ENCODE measurements at regions of chr17 and their contacts with region 1.

Region 1: DNA sequence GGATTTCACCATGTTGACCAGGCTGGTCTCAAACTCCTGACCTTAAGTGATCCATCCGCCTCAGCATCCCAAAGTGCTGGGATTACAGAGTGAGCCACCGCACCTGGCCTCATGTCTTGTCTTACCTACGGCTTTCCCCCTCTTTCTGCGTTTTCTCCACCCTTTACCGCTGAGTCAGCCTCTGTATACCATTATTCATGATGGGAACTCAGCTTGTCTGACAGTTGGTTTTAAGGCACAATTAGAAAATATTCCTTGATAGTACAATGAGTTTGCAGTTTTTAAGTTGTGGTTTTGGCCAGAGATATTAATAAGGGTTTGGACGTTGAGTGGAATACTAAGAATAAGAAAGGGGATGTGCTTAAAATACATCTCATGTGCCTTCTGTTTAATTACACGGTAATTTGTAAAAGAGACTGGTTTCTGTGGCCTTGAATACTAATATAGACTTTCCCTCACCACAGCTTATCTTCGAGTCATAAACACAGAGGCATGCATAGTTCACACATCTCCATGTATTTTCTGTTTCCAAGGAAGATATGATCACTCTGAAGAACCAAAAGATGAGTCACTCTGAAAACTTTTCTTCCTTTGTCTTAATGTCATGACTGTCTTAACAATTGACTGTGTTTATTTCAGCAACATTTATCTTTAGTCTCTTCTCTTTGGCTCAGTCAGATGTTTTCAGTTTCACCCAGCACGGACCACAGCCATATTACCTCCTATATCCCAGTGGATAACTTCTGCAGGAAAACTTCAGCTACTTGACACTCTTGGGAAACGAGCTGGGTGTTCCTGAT is 54.4 kb downstream of the PITPNC1 start:
- DNase-seq: no peak
- H3K4me3 Mint-ChIP-seq: peak overlapping the region; percentile 5
- H3K27ac Mint-ChIP-seq: peak overlapping the region; percentile 73
- H3K4me1 Mint-ChIP-seq: peaks cover 43% of the 10 kb centered on the region
- H3K27me3 Mint-ChIP-seq: peaks cover 4% of the 10 kb centered on the region

Region 2: GRCh38 chr17:67366193-67367157 is 65.0 kb before region 1 on chr17 and contains the start of gene PSMD12:
- intact Hi-C with region 1: loop called (anchors 2 kb)
- DNase-seq: peak; percentile 90
- H3K4me3 Mint-ChIP-seq: peak within 1 kb of the TSS; percentile 96
- H3K27ac Mint-ChIP-seq: peak within 1 kb of the TSS; percentile 95
- H3K4me1 Mint-ChIP-seq: peaks cover 45% of the 10 kb centered on the region
- H3K27me3 Mint-ChIP-seq: peaks cover 20% of the 10 kb centered on the region
- total RNA-seq, gene PSMD12: 75.1 and 75.4 TPM in 2 replicates

Region 3: GRCh38 chr17:67390646-67391384 is 40.6 kb before region 1 on chr17:
- intact Hi-C with region 1: loop called (anchors 1 kb)
- DNase-seq: peak; percentile 64
- H3K4me3 Mint-ChIP-seq: peak overlapping the region; percentile 67
- H3K27ac Mint-ChIP-seq: peak overlapping the region; percentile 85
- H3K4me1 Mint-ChIP-seq: peaks cover 35% of the 10 kb centered on the region
- H3K27me3 Mint-ChIP-seq: no peaks in the 10 kb centered on the region

Region 4: DNA sequence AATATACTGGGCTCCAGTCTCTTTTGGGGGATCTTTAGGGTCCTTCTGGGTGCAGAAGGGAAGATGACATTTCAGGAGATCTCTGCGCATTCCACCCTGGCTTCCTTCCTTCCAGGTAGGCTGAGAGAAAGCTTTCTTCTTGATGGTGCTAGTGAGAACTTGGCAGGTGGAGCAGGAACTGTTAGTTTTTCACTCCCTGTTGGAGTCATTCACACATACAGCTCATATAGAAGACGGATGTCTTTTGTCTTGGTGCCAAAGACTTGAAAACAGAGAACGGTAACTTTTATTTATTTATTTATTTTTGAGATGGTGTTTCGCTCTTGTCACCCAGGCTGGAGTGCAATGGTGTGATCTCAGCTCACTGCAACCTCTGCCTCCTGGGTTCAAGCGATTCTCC is 10.5 kb before region 1 on chr17:
- intact Hi-C with region 1: no loop called
- DNase-seq: no peak
- H3K4me3 Mint-ChIP-seq: no peak overlapping the region
- H3K27ac Mint-ChIP-seq: peak overlapping the region; percentile 36
- H3K4me1 Mint-ChIP-seq: peaks cover 28% of the 10 kb centered on the region
- H3K27me3 Mint-ChIP-seq: peaks cover 4% of the 10 kb centered on the region

Region 5: DNA sequence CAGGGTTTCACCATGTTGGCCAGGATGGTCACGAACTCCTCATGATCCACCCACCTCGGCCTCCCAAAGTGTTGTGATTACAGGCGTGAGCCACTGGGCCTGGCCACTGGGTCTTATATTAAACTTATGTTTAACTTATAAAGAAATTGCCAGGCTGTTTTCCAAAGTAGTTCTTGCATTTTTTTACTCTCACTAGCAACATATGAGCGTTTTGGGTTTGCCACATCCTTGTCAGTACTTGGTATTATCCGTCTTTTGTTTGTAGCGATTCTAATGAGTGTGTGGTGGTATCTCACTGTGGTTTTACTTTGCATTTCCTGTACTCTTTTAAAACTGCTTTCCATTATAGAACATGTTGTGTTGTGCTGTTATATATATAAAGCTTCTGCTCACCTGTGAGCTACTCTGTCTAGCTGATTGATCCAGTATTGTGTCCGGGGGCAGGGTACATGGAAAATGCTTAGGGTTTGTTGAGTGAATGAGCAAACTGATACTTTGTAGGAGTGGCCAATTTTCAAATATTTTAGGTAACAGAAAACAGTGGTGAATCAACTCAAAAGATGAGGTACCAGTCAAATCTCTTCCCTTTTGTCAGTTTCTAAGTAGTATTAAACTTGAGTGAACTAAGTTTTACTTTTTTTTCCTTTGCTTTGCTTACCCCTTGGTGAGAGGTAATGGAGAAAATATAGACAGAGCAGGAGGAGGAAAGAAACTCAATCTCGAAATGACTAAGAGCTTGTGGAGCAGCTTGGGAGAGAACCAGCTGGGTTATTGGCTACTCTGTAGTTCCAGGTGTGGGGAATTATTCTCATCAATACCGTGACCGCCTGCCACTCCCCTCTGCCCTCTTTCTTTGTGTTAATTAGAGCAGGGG is 21.5 kb after region 1 on chr17:
- intact Hi-C with region 1: loop called (anchors 1 kb)
- DNase-seq: no peak
- H3K4me3 Mint-ChIP-seq: peak overlapping the region; percentile 34
- H3K27ac Mint-ChIP-seq: peak overlapping the region; percentile 87
- H3K4me1 Mint-ChIP-seq: peaks cover 55% of the 10 kb centered on the region
- H3K27me3 Mint-ChIP-seq: no peaks in the 10 kb centered on the region

Region 6: DNA sequence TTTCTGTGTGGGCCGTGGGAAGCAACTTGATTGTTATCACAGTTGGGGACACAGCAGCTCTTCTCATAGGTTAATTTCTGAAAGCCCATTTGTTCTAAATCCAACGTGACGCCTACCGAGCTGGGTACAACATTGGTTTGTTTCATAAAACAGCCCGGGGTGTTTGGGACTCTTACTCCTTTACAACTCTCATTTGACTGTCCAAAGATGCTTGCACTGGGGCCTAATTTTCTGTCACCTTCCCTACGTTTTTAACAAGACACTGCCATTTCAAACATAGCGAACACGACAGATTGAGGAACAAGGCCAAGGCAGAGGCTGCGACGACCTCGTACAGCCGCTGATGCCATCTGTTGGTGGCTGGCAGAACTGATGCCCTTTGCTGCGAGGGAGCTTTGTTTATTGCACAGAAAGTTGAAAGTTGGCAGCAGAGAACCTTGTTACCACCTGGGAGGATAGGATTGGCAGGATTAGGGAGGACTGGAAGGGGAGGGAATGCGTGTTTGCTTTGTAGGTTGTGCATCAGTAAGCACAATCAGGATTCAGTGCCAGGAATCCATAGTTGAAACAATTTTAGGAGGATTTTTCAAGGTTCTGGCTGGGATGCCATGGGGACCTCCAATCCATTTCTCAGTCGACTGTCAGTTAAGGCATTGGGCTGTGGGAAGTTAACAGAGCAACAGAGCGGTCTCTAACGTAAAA is 43.9 kb after region 1 on chr17:
- intact Hi-C with region 1: loop called (anchors 1 kb)
- DNase-seq: peak; percentile 77
- H3K4me3 Mint-ChIP-seq: peak overlapping the region; percentile 30
- H3K27ac Mint-ChIP-seq: peak overlapping the region; percentile 62
- H3K4me1 Mint-ChIP-seq: peaks cover 44% of the 10 kb centered on the region
- H3K27me3 Mint-ChIP-seq: peaks cover 3% of the 10 kb centered on the region

Region 7: DNA sequence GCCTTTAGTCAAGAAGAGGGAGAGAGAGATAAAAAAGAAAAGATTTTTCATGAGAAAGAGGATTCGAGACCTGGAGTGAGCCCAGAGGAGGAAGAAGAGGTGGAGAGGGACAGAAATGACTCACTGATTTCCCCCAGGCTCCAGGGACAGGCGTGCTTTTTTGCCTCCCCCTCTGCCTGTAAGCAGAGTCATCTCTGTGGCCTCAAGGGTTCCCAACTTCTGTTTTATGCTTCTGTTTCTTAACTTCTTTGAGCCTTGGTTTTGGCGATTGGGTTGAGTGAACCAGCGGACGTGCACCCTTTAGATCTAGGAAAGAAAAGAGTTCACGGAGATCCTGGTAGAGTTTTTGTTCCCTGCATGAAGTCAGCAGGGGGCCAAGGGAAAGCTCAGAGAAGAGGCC is 138.4 kb after region 1 on chr17:
- intact Hi-C with region 1: no loop called
- DNase-seq: no peak
- H3K4me3 Mint-ChIP-seq: no peak overlapping the region
- H3K27ac Mint-ChIP-seq: no peak overlapping the region
- H3K4me1 Mint-ChIP-seq: no peaks in the 10 kb centered on the region
- H3K27me3 Mint-ChIP-seq: no peaks in the 10 kb centered on the region